A549 (cell line): ENCODE measurements at regions of chr15 and their contacts with region 1.

Region 1: GRCh38 chr15:29747837-29748417 is 74.3 kb downstream of the TJP1 start:
- DNase-seq: peak in 1 of 2 experiments; percentile 31
- ATAC-seq: peak; percentile 44 to 58; a peak in 4 of 6 replicates
- H3K4me3 ChIP-seq: no peak overlapping the region
- H3K27ac ChIP-seq: no peak overlapping the region
- H3K4me1 ChIP-seq: peaks cover 16% of the 10 kb centered on the region; the same call in 2 of the 3 replicates
- CTCF ChIP-seq: peak; percentile 61
- EP300 ChIP-seq: no peak
- POLR2A ChIP-seq: no peak
- RAD21 ChIP-seq: peak; percentile 82 to 83

Region 2: GRCh38 chr15:29712149-29712885 is 35.6 kb before region 1 on chr15:
- CTCF ChIA-PET with region 1: interaction called, 10 read pairs
- POLR2A ChIA-PET with region 1: no interaction called
- DNase-seq: no peak
- ATAC-seq: no peak
- H3K4me3 ChIP-seq: no peak overlapping the region
- H3K27ac ChIP-seq: peak overlapping the region in 1 of 2 experiments; percentile 21; a peak in 1 of 6 replicates
- H3K4me1 ChIP-seq: peaks cover 17% of the 10 kb centered on the region; the same call in 2 of the 3 replicates
- CTCF ChIP-seq: no peak
- EP300 ChIP-seq: no peak
- POLR2A ChIP-seq: no peak
- RAD21 ChIP-seq: no peak

Region 3: GRCh38 chr15:29821416-29822131 is 73.6 kb after region 1 on chr15:
- CTCF ChIA-PET with region 1: interaction called, 17 read pairs
- POLR2A ChIA-PET with region 1: interaction called, 23 read pairs
- DNase-seq: peak; percentile 75 to 89
- ATAC-seq: peak; percentile 79 to 81
- H3K4me3 ChIP-seq: peak overlapping the region; percentile 66
- H3K27ac ChIP-seq: peak overlapping the region; percentile 95 to 96
- H3K4me1 ChIP-seq: peaks cover 16% of the 10 kb centered on the region; the same call in 2 of the 3 replicates
- CTCF ChIP-seq: no peak
- EP300 ChIP-seq: no peak
- POLR2A ChIP-seq: no peak
- RAD21 ChIP-seq: no peak; a peak in 2 of 5 replicates

Region 4: GRCh38 chr15:30065025-30065801 is 317.3 kb after region 1 on chr15:
- CTCF ChIA-PET with region 1: interaction called, 10 read pairs
- POLR2A ChIA-PET with region 1: no interaction called
- DNase-seq: no peak
- ATAC-seq: no peak
- H3K4me3 ChIP-seq: no peak overlapping the region
- H3K27ac ChIP-seq: peak overlapping the region; percentile 15 to 27; a peak in 2 of 6 replicates
- H3K4me1 ChIP-seq: peaks cover 17% of the 10 kb centered on the region
- CTCF ChIP-seq: no peak
- EP300 ChIP-seq: no peak
- POLR2A ChIP-seq: no peak
- RAD21 ChIP-seq: no peak